OCI-LY7 (cell line): ENCODE measurements at regions of chr12 and their contacts with region 1.

Region 1: DNA sequence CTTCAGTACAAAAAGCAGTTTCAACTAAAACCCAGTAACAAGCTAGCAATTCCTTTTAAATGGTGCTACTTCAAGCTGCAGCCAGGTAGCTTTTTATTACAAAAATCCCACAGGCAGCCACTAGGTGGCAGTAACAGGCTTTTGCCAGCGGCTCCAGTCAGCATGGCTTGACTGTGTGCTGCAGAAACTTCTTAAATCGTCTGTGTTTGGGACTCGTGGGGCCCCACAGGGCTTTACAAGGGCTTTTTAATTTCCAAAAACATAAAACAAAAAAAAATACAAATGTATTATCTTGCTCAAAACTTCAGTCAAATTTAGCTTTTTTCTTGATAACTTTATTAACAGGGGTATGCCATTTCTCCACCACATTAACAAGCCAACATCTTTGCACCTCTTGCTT is 3.6 kb upstream of the CLEC4E start:
- DNase-seq: peak; percentile 87
- H3K4me3 ChIP-seq: peak overlapping the region; percentile 43
- H3K27ac ChIP-seq: no peak overlapping the region
- H3K4me1 ChIP-seq: peaks cover 18% of the 10 kb centered on the region
- CTCF ChIP-seq: peak; percentile 98

Region 2: DNA sequence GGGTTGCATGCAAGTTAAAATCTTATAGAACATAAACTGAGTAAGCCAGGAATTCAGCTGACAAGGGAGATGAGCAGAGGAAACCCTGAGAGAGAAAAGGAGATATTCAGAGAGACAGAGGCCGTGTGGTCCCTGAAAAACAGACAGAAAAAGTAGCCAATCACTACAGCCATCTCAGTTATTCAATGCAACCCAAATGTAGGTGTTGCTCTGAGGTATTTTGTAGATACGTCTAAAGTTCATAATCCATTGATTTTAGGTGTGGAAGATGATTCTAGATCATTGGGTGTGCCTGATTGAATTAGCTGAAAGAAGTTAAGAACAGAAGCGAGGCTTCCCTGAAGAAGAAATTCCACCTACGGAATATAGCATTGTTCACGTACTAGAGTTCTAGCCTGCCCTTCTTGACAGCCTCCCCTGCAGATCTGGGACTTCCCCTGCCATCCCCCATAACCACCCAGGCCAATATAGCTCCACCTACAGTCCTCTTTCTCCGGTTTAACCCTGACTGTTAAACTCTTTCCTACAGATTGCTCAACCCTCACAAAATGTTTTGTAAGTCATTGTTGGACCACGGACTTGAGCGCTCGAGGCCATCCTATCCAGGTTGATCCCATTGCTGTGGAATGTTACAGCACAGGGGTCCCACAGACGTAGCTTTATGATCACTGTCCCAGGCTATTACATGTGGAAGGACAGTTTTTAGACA is 46.7 kb after region 1 on chr12:
- CTCF ChIA-PET with region 1: interaction called, 4 read pairs
- POLR2A ChIA-PET with region 1: interaction called, 5 read pairs
- intact Hi-C with region 1: loop called (anchors 5 kb)
- DNase-seq: peak; percentile 61
- H3K4me3 ChIP-seq: peak overlapping the region; percentile 42
- H3K27ac ChIP-seq: peak overlapping the region; percentile 22
- H3K4me1 ChIP-seq: peaks cover 14% of the 10 kb centered on the region
- CTCF ChIP-seq: peak; percentile 70

Region 3: GRCh38 chr12:8662593-8662992 is 118.3 kb after region 1 on chr12 and contains the start of gene MFAP5:
- CTCF ChIA-PET with region 1: no interaction called
- POLR2A ChIA-PET with region 1: no interaction called
- intact Hi-C with region 1: loop called (anchors 5 kb)
- DNase-seq: no peak
- H3K4me3 ChIP-seq: no peak within 1 kb of the TSS
- H3K27ac ChIP-seq: no peak within 1 kb of the TSS
- H3K4me1 ChIP-seq: peaks cover 7% of the 10 kb centered on the region
- CTCF ChIP-seq: no peak
- total RNA-seq, gene MFAP5: not detected in 2 replicates

Region 4: GRCh38 chr12:8681041-8681902 is 137.0 kb after region 1 on chr12:
- CTCF ChIA-PET with region 1: no interaction called
- POLR2A ChIA-PET with region 1: interaction called, 4 read pairs
- intact Hi-C with region 1: loop called (anchors 5 kb)
- DNase-seq: no peak
- H3K4me3 ChIP-seq: no peak overlapping the region
- H3K27ac ChIP-seq: no peak overlapping the region
- H3K4me1 ChIP-seq: peaks cover 18% of the 10 kb centered on the region
- CTCF ChIP-seq: no peak

Region 5: DNA sequence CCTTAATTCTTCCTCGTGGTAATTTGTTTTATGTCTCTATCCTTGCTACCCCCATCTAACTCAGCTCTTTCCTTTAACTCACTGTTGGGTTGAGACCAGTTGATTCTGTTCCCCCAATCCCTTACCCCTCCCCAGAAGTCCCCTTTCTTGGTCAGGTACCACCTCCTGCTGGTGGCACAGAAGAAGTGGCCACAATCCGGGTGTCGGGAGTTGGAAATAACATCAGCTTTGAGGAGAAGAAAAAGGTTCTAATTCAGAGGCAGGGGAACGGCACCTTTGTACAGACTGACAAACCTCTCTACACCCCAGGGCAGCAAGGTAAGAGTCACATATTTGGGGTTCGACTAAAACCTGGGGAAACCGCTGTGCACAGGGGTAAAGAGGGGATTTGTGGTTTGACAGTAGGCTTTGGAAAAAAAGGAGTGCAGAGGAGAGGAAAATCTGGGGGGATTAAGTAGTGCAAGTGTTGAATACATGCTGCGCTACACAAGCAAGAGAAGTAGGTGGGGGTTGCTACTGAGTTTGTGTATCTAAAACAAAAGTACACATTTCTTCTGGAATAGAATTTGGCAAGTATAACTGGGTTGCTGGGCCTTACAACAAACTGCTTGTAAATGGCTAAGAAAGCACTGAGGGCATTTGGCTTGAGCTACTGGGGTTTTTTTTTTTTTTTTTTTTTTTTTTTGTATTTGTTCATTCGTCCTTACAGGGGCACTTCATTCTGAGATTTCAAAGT is 279.4 kb after region 1 on chr12:
- CTCF ChIA-PET with region 1: no interaction called
- POLR2A ChIA-PET with region 1: no interaction called
- intact Hi-C with region 1: loop called (anchors 5 kb)
- DNase-seq: peak; percentile 66
- H3K4me3 ChIP-seq: no peak overlapping the region
- H3K27ac ChIP-seq: no peak overlapping the region
- H3K4me1 ChIP-seq: peaks cover 14% of the 10 kb centered on the region
- CTCF ChIP-seq: peak; percentile 94

Region 6: DNA sequence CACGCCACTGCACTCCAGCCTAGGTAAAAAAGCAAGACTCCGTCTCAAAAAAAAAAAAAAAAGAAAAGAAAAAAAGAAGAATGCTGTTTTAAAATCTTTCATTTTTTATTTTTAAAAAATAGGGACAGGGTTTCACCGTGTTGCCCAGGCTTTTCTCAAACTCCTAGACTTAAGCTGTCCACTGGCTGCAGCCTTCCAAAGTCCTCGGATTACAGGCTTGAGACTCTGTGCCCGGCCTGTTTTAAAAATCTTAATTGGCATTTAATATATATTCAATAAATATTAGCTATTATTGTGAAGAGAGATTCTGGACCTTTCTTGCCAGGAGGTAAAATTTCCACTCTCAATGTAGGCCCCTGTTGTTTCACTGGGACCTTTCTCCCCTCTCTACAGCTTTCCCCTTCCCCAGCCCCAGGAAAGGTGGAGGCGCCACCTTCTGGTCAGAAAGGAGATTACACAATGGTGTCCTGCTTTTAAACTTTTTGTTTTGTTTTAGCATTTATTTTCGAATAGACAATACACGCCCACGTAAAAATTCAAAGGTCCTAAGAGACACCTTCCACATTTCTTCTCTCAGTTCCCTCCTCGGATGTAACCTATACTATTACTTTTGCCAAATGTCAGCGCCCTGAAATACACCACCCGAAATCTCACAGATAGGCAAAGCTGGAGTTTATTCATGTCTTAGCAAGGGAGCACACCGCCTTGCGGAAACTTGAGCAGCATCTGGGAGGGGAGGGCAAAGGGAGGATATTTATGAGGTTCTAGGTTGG is 346.2 kb after region 1 on chr12:
- CTCF ChIA-PET with region 1: no interaction called
- POLR2A ChIA-PET with region 1: interaction called, 4 read pairs
- intact Hi-C with region 1: loop called (anchors 2 kb)
- DNase-seq: peak; percentile 64
- H3K4me3 ChIP-seq: peak overlapping the region; percentile 63
- H3K27ac ChIP-seq: no peak overlapping the region
- H3K4me1 ChIP-seq: no peaks in the 10 kb centered on the region
- CTCF ChIP-seq: peak; percentile 99

Region 7: GRCh38 chr12:9039397-9039977 is 495.2 kb after region 1 on chr12:
- CTCF ChIA-PET with region 1: no interaction called
- POLR2A ChIA-PET with region 1: no interaction called
- intact Hi-C with region 1: loop called (anchors 5 kb)
- DNase-seq: peak; percentile 68
- H3K4me3 ChIP-seq: no peak overlapping the region
- H3K27ac ChIP-seq: no peak overlapping the region
- H3K4me1 ChIP-seq: no peaks in the 10 kb centered on the region
- CTCF ChIP-seq: peak; percentile 96